Activated naive CD4-positive, alpha-beta T cell treated with anti-CD3 and anti-CD28 coated beads, Interleukin-2, amount 10 ng/mL, durations not matched to agents 7 days and 5 days (primary cell): ENCODE measurements at regions of chr22 and their contacts with region 1.

Region 1: GRCh38 chr22:39332441-39333064 is 13.1 kb upstream of the RPL3 start:
- DNase-seq: no peak
- H3K4me3 Mint-ChIP-seq: no peak overlapping the region
- H3K27ac Mint-ChIP-seq: no peak overlapping the region
- H3K4me1 Mint-ChIP-seq: peaks cover 17% of the 10 kb centered on the region
- H3K27me3 Mint-ChIP-seq: peaks cover 7% of the 10 kb centered on the region

Region 2: DNA sequence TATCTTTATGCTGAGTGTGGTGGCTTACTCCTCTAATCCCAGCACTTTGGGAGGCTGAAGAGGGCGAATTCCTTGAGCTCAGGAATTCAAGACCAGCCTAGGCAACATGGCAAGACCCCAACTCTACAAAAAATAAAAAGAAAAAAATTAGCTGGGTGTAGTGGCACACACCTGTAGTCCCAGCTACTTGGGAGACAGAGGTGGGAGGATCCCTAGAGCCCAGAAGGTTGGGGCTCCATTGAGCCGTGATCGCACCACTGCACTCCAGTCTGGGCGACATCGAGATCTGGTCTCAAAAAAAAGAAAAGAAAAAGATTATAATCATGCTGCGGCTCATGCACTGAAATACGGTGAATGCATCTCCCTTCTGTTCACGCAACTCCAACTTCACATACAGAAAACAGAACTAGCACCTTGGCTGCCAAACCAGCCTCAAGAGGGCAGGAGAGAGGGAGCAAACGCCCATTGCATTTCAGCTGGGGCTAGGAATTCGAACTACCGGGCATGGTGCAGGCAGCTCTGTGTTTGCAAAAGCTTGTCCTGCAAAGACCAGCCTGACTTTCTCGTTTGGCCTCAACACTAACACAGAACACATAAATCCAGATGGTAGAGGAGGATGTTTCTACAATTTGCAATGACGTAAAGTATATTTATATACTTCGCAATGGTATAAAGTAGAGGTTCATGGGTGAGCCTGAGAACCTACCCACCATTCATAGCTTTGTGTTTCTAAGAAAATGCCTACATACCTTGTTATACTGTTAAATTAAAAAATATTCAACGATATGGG is 10.9 kb after region 1 on chr22:
- CTCF ChIA-PET with region 1: interaction called, 19 read pairs
- DNase-seq: peak; percentile 78
- H3K4me3 Mint-ChIP-seq: no peak overlapping the region
- H3K27ac Mint-ChIP-seq: no peak overlapping the region
- H3K4me1 Mint-ChIP-seq: peaks cover 5% of the 10 kb centered on the region
- H3K27me3 Mint-ChIP-seq: peaks cover 51% of the 10 kb centered on the region